Posterior vena cava (tissue), 2 donors: ENCODE measurements at regions of chr4 and their contacts with region 1.

Region 1: DNA sequence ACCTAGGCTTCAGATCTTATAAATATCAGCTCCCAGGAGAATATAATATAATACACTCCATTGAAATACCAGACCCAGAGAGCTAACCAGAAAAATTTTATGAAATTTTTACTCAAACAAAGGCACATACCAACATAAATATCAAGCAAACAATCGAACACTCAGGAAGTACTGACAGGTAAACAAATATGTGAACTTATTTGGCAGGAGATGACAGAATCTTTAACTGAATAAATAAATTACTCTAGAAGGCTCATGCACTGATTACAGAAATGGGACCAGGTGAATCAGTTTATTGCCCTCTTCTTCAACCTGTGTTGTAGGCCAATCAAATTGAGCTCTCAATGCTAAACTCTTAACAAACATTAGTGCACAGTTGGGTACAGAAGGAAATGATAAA is 225.2 kb upstream of the PABPC4L start:
- DNase-seq: no peak

Region 2: GRCh38 chr4:133694416-133694815 is 732.4 kb before region 1 on chr4:
- intact Hi-C with region 1: loop called in 1 of 2 experiments (anchors 5 kb)
- DNase-seq: no peak